Dendritic cell treated with granulocyte-macrophage colony-stimulating factor and Interleukin-4, amounts not matched to agents 40 ng/mL and 50 ng/mL, for 4 days (primary cell): ENCODE measurements at regions of chr4 and their contacts with region 1.

Region 1: GRCh38 chr4:74623041-74623440 is 171.3 kb downstream of the BTC start:
- H3K4me3 Mint-ChIP-seq: no peak overlapping the region
- H3K27ac Mint-ChIP-seq: no peak overlapping the region
- H3K4me1 Mint-ChIP-seq: peaks cover 15% of the 10 kb centered on the region
- H3K27me3 Mint-ChIP-seq: peaks cover 2% of the 10 kb centered on the region

Region 2: GRCh38 chr4:74376888-74377483 is 246.1 kb before region 1 on chr4:
- intact Hi-C with region 1: loop called (anchors 2 kb)
- H3K4me3 Mint-ChIP-seq: no peak overlapping the region
- H3K27ac Mint-ChIP-seq: no peak overlapping the region
- H3K4me1 Mint-ChIP-seq: peaks cover 20% of the 10 kb centered on the region
- H3K27me3 Mint-ChIP-seq: no peaks in the 10 kb centered on the region

Region 3: DNA sequence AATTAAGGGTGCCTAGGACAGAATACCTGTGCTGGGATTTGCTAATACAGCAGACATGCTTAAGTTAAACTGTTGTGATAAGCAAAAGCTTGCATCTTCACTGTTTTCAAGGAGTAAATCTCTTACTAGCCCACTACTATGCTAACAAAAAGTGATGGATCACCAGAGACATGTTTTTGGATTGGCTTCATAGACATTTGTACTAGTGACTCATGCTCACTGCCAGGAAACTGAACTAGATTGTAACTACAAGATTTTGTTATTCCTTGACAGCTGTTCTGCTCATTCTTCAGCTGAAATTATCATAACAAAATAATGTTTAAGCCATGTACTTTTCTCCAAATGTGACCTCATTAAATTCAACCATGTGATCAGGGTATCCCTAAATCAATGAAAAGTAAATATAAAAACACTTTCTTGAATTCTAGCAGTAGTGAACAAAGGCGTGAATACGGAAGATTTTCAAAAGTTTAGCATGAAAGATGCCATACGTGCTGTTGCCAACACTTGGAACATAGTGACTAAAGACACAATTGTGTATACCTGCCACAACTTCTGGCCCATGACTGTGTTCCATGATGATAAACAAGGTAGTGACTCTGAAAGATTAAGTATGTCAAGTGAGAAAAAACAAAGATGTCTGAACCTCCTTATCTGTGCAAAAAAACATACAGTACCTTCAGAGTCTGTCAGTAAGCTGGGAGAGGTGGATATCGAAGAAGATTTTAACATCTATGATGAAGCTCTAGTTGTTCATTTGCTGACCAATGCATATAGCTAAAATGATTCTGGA is 17.3 kb after region 1 on chr4:
- intact Hi-C with region 1: no loop called
- H3K4me3 Mint-ChIP-seq: no peak overlapping the region
- H3K27ac Mint-ChIP-seq: no peak overlapping the region
- H3K4me1 Mint-ChIP-seq: peaks cover 13% of the 10 kb centered on the region
- H3K27me3 Mint-ChIP-seq: no peaks in the 10 kb centered on the region

Region 4: DNA sequence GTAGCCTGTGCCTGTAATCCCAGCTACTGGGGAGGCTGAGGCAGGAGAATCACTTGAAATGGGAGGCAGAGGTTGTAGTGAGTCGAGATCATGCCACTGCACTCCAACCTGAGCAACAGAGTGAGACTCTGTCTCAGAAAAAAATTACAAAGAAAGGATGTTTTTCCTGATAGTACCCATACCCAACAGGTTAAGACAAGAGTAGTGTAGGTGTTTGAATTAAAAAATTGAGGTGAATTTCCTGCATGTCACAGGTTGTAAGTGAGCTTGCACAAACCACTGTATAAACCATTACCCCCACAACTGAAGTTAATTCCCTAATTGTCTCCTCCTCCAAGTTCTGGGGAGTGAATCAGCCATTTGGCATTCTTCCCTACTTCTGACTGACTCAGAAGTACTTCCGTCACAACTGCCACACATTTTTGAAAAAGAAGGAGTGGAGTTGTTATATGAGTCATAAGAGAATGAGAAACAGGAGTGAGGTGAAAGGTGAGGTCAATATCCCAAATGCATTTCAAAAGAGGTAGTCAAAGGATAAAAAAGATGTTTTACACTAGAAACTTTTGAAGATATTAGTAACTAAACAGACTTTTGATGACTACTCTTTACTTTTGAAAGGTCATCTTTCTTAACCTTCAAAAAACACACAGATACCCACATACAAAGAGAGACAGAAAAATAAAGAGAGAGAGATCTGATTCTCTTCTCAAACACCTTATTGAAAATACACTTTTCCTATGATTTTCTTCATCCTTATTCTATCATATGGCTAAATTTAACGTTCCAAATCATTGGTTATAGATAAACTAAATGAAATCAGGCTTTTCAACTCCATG is 36.8 kb after region 1 on chr4:
- intact Hi-C with region 1: loop called (anchors 5 kb)
- H3K4me3 Mint-ChIP-seq: no peak overlapping the region
- H3K27ac Mint-ChIP-seq: no peak overlapping the region
- H3K4me1 Mint-ChIP-seq: peaks cover 21% of the 10 kb centered on the region
- H3K27me3 Mint-ChIP-seq: no peaks in the 10 kb centered on the region